Posterior vena cava (tissue), 2 donors: ENCODE measurements at regions of chr9 and their contacts with region 1.

Region 1: DNA sequence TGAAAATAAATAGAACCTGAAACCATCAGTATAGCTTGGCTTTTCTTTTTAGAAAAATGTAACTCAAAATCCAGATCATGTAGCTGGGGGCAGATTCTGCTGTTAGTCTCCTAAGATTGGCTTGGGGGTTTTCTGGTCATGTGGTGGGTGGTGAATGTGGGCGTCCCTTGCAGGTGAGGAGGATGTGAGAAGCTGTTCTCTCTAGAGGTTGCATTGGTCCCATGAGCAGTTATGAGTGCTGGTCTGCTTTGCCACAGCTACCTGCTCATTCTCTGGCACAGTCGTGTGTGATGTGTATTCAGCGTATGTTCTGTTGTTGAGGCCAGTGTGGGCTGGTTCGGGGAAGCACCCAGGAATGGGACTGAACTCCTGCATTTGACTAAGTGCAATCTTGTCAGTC is 466.8 kb downstream of the DIRAS2 start:
- DNase-seq: no peak

Region 2: DNA sequence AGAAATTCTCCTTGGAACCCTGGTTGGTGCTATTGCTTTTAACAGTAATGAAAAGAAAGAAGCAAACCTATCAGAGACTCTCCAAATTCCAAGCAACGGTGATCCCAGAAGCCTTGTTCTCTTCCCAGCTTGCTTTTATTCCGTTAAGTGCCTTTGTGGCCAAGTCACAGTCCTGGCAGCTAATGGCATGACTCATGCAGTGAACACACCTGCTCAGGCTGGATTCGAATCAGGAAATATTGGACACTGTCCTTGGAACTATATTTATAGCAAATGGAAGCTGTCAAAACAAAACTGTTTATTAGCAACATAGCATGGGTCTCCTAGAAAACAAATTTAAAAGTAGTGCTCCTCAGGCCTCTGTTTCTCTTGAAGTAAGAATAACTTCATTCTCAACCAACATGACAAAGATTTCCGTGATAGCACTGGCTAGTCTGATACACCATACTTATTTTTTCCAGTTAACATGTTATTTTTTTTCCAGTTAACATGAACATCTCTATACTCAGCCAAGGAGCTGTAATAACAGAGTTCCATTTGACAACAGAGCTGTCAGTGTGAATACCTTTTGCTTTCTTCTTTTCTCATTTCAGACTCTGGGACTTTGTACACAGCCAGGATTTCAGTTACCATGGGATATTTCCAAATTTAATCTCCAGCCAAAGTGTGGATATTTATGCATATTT is 68.7 kb before region 1 on chr9:
- intact Hi-C with region 1: no loop called
- DNase-seq: no peak

Region 3: GRCh38 chr9:90309809-90310520 is 134.1 kb after region 1 on chr9:
- intact Hi-C with region 1: loop called in 1 of 2 experiments (anchors 10 kb)
- DNase-seq: no peak

Region 4: DNA sequence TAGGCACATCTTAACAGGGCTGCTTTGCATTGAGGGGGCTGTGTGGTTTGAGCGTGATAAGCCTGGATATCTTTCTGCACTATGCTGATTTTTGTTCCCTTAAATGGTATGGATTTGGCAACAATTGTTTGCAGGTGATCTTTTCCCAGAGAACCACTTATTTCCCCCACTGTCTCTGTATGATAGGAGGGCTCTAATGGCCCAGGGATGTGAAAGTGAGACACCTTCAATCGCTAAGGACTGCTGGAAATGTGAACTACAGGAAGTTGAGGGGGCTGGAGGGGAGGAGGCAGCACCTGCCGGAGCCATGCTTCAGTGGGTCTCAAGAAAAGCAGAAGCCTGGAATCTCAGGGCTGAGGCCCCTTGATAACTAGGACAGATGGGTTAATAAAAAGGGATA is 655.1 kb after region 1 on chr9:
- intact Hi-C with region 1: loop called in 1 of 2 experiments (anchors 5 kb)
- DNase-seq: no peak